ENCODE measurements at regions of chr7 and their contacts with region 1.

Region 1: GRCh38 chr7:28389504-28390395 is 22.6 kb upstream of the CREB5 start:
- DNase-seq: peak; percentile 57
- H3K4me3 ChIP-seq: peak overlapping the region; percentile 46 to 52 (median 50)
- H3K27ac ChIP-seq: peak overlapping the region in 3 of 4 donors; percentile 17 to 60 (median 59)
- H3K4me1 ChIP-seq: peaks cover 0 to 12% (median 12%) of the 10 kb centered on the region in 4 donors
- H3K27me3 ChIP-seq: no peaks in the 10 kb centered on the region
- CTCF ChIP-seq: peak; percentile 68 to 91 (median 86)
- EP300 ChIP-seq: no peak
- POLR2A ChIP-seq: no peak

Region 2: GRCh38 chr7:28530175-28530802 is 140.5 kb after region 1 on chr7:
- intact Hi-C with region 1: no loop called
- DNase-seq: no peak
- H3K4me3 ChIP-seq: no peak overlapping the region
- H3K27ac ChIP-seq: no peak overlapping the region
- H3K4me1 ChIP-seq: peaks cover 10 to 21% (median 13%) of the 10 kb centered on the region in 4 donors
- H3K27me3 ChIP-seq: no peaks in the 10 kb centered on the region
- CTCF ChIP-seq: no peak
- EP300 ChIP-seq: no peak
- POLR2A ChIP-seq: no peak

Region 3: DNA sequence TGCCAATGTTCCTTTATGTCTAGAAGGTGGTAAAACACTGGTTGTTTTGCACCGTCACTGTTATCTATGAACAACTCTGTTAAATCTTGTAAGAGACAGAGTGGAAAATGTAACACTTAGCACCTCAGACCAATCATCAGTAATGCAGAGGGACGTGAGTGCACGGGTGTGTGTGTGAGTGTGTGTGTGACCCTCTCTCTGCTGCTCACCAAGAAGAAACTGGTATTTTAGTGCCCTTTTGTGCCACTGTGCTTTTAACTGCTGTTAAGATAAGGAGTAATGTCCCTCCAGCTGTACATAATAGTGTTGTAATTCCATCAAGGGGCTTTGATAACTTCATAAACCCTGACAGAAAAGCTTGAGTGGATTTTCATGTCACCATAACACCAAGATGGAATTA is 152.7 kb after region 1 on chr7:
- intact Hi-C with region 1: loop called (anchors 10 kb)
- DNase-seq: no peak
- H3K4me3 ChIP-seq: no peak overlapping the region
- H3K27ac ChIP-seq: no peak overlapping the region
- H3K4me1 ChIP-seq: peaks cover 0 to 7% (median 0%) of the 10 kb centered on the region in 4 donors
- H3K27me3 ChIP-seq: no peaks in the 10 kb centered on the region
- CTCF ChIP-seq: no peak
- EP300 ChIP-seq: no peak
- POLR2A ChIP-seq: no peak

Region 4: DNA sequence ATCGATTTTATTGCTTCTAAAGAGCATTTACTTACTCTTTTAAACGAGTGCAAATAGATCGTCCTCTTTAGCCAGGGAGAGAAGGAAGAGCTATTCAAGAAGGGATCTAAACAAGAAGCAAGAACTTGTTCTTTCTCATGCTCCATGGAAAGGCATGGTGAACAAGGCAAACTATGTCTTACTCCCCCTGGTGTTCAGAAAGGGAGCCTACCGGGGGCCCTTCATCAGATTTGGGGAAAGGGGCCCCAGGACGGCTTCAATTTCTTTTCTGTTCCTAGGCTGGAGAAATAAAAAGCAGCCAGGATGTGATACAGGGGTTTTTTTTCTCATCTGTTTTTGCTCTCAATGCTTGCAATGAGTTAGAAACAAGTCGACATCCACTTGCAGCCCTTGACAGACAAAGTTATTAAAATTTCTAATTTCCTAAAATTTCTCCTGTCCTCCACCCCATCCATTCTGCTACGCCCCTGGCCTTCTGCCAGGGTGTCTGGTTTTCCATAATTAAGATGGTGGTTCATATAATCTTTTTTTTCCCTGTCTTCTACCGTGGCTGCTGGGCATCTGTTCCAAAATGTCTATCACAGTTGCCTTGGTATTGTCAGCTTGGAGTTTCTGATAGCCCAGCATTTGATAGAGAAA is 237.0 kb after region 1 on chr7:
- intact Hi-C with region 1: loop called (anchors 10 kb)
- DNase-seq: no peak
- H3K4me3 ChIP-seq: no peak overlapping the region
- H3K27ac ChIP-seq: peak overlapping the region in 3 of 4 donors; percentile 40 to 50 (median 49)
- H3K4me1 ChIP-seq: peaks cover 31 to 70% (median 52%) of the 10 kb centered on the region in 4 donors
- H3K27me3 ChIP-seq: no peaks in the 10 kb centered on the region
- CTCF ChIP-seq: peak; percentile 55 to 66 (median 63)
- EP300 ChIP-seq: no peak
- POLR2A ChIP-seq: no peak